Dendritic cell treated with granulocyte-macrophage colony-stimulating factor and Interleukin-4, amounts not matched to agents 40 ng/mL and 50 ng/mL, for 4 days (primary cell): ENCODE measurements at regions of chr7 and their contacts with region 1.

Region 1: GRCh38 chr7:36784991-36785940 is 61.0 kb upstream of the AOAH start:
- H3K4me3 Mint-ChIP-seq: peak overlapping the region; percentile 11
- H3K27ac Mint-ChIP-seq: peak overlapping the region; percentile 81
- H3K4me1 Mint-ChIP-seq: peaks cover 34% of the 10 kb centered on the region
- H3K27me3 Mint-ChIP-seq: no peaks in the 10 kb centered on the region

Region 2: DNA sequence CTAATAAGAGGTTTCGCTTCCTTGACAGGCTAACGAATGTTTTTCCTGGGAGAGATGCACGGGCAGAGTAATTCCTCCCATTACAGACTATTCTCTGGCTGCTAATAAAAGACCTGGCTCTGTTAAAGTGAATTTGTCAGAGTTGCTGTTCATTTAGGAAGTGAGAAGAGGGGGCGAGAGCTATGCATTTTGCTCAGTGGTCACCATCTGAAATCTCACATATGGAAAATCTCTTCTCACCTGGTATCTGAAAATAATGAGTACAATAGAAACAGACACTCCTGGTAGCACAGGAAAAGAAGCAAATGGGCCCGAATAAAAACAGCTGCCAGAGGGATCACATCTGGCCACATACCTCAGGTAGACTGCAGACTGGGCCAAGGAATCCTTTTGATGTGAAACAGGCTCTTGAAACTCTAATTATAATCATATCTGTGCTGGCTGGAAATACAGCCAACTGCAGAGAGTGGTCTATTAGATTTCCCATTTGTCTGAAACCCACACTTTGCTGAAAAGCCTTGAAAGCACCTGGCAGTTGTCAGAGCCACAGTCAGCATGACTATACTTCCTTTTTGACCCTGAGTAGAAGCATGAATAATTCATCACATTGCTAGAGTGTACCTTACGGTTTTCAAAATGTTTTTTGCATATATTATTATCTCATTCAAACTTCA is 94.6 kb before region 1 on chr7:
- intact Hi-C with region 1: loop called (anchors 5 kb)
- H3K4me3 Mint-ChIP-seq: no peak overlapping the region
- H3K27ac Mint-ChIP-seq: peak overlapping the region; percentile 25
- H3K4me1 Mint-ChIP-seq: peaks cover 36% of the 10 kb centered on the region
- H3K27me3 Mint-ChIP-seq: no peaks in the 10 kb centered on the region

Region 3: GRCh38 chr7:36742911-36743775 is 42.1 kb before region 1 on chr7:
- intact Hi-C with region 1: loop called (anchors 2 kb)
- H3K4me3 Mint-ChIP-seq: no peak overlapping the region
- H3K27ac Mint-ChIP-seq: peak overlapping the region; percentile 82
- H3K4me1 Mint-ChIP-seq: peaks cover 79% of the 10 kb centered on the region
- H3K27me3 Mint-ChIP-seq: no peaks in the 10 kb centered on the region